CD8-positive, alpha-beta T cell (primary cell): ENCODE measurements at regions of chr14 and their contacts with region 1.

Region 1: DNA sequence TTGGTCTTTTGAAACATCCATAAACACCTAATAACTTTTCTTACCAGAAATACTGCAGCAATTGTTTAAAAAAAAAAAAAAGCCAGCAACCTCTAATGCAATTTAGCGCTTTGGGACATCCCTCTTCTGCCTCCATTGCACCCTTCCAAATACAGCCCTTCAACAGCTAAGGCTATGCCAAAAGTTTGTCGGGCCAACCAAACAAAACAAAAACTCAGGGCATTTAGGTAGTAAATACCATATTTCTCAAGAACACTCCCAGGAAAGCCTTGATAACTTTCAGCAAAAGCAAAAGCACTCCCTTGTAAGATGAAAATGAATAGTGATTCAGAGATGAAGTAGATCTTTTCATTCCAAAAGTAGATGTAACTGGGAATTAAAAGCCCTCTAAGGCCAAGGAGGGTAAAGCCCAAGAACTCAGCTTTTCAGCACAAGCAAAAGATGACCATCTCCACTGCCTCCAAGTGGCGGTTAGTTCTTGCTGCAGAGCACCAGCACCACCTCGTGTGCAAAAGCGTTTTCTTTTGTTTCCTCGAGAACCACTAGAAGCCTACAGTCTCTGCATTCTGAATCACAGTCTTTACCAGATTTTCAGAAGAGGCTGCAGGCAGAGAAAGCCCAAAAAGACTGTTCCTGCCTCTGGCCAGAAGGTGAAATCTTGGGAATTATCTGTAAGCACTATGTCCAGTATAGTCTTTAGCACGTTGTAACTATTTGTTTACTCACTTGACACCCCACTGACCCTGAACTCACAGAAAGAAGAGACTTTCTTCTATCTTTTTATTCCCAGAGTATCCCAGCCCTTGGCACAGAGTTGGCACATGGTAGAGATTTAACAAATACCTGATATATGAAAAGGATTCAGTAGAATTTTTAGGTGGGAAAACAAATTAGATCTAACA is 53.1 kb downstream of the SIX6 start:
- DNase-seq: peak in 2 of 9 experiments; percentile 26 to 36
- ATAC-seq: no peak
- H3K4me3 ChIP-seq: no peak overlapping the region
- H3K4me3 Mint-ChIP-seq: no peak overlapping the region
- H3K27ac ChIP-seq: no peak overlapping the region
- H3K27ac Mint-ChIP-seq: no peak overlapping the region
- H3K4me1 ChIP-seq: no peaks in the 10 kb centered on the region
- H3K4me1 Mint-ChIP-seq: no peaks in the 10 kb centered on the region
- H3K27me3 ChIP-seq: no peaks in the 10 kb centered on the region
- H3K27me3 Mint-ChIP-seq: peaks cover 3% of the 10 kb centered on the region
- CTCF ChIP-seq: no peak

Region 2: GRCh38 chr14:60064491-60065072 is 497.5 kb before region 1 on chr14:
- CTCF ChIA-PET with region 1: interaction called, 3 read pairs
- POLR2A ChIA-PET with region 1: no interaction called
- intact Hi-C with region 1: loop called in 1 of 2 experiments (anchors 10 kb)
- DNase-seq: peak in 2 of 9 experiments; percentile 53 to 66
- ATAC-seq: peak; percentile 80
- H3K4me3 ChIP-seq: no peak overlapping the region
- H3K4me3 Mint-ChIP-seq: no peak overlapping the region
- H3K27ac ChIP-seq: no peak overlapping the region
- H3K27ac Mint-ChIP-seq: no peak overlapping the region
- H3K4me1 ChIP-seq: no peaks in the 10 kb centered on the region
- H3K4me1 Mint-ChIP-seq: no peaks in the 10 kb centered on the region
- H3K27me3 ChIP-seq: no peaks in the 10 kb centered on the region
- H3K27me3 Mint-ChIP-seq: peaks cover 2% of the 10 kb centered on the region
- CTCF ChIP-seq: peak; percentile 71

Region 3: DNA sequence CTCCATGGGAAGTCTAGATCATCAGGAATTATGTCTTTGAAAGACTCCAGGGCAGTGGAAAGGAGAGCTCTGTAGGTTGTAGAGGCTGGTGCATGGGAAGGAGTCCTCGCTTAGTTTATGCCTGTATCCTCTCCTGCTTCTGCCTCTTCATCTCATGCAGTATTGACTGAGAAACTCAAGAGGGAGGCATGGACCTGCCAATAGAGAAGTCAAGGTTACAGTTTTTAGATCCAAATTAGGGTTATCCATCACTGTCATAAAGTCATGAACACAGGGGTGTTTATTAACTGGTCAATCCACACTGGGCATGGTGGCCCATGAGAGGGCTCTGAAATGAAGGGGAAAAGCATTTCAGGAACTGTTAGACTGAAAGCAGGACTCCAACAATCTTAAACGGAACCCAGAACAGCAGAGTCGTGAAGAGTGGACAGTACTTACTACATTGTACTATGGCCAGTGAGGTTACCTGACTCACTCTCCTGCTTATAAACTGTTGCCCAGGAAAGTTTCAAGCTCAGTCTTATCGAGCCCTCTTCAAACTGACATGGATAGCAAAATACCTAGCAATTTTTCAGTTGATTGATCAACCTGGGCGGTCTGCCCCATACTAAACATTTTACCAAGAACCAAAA is 366.8 kb before region 1 on chr14:
- CTCF ChIA-PET with region 1: no interaction called
- POLR2A ChIA-PET with region 1: no interaction called
- intact Hi-C with region 1: loop called in 1 of 2 experiments (anchors 5 kb)
- DNase-seq: peak in 2 of 9 experiments; percentile 13 to 33
- ATAC-seq: peak; percentile 52
- H3K4me3 ChIP-seq: no peak overlapping the region
- H3K4me3 Mint-ChIP-seq: no peak overlapping the region
- H3K27ac ChIP-seq: no peak overlapping the region
- H3K27ac Mint-ChIP-seq: no peak overlapping the region
- H3K4me1 ChIP-seq: no peaks in the 10 kb centered on the region
- H3K4me1 Mint-ChIP-seq: no peaks in the 10 kb centered on the region
- H3K27me3 ChIP-seq: peaks cover 0 to 3% of the 10 kb centered on the region in 2 experiments
- H3K27me3 Mint-ChIP-seq: peaks cover 5% of the 10 kb centered on the region
- CTCF ChIP-seq: no peak

Region 4: GRCh38 chr14:60266021-60266937 is 295.8 kb before region 1 on chr14:
- CTCF ChIA-PET with region 1: no interaction called
- POLR2A ChIA-PET with region 1: no interaction called
- intact Hi-C with region 1: loop called in 1 of 2 experiments (anchors 5 kb)
- DNase-seq: peak in 5 of 9 experiments; percentile 22 to 57 (median 29)
- ATAC-seq: peak; percentile 61
- H3K4me3 ChIP-seq: no peak overlapping the region
- H3K4me3 Mint-ChIP-seq: no peak overlapping the region
- H3K27ac ChIP-seq: no peak overlapping the region
- H3K27ac Mint-ChIP-seq: no peak overlapping the region
- H3K4me1 ChIP-seq: peaks cover 6% of the 10 kb centered on the region
- H3K4me1 Mint-ChIP-seq: peaks cover 33% of the 10 kb centered on the region
- H3K27me3 ChIP-seq: no peaks in the 10 kb centered on the region
- H3K27me3 Mint-ChIP-seq: no peaks in the 10 kb centered on the region
- CTCF ChIP-seq: peak; percentile 75

Region 5: GRCh38 chr14:60349663-60350365 is 212.3 kb before region 1 on chr14:
- CTCF ChIA-PET with region 1: no interaction called
- POLR2A ChIA-PET with region 1: no interaction called
- intact Hi-C with region 1: loop called (anchors 2 to 5 kb)
- DNase-seq: peak in 4 of 9 experiments; percentile 19 to 56 (median 40)
- ATAC-seq: peak; percentile 57
- H3K4me3 ChIP-seq: no peak overlapping the region
- H3K4me3 Mint-ChIP-seq: no peak overlapping the region
- H3K27ac ChIP-seq: no peak overlapping the region
- H3K27ac Mint-ChIP-seq: no peak overlapping the region
- H3K4me1 ChIP-seq: no peaks in the 10 kb centered on the region
- H3K4me1 Mint-ChIP-seq: peaks cover 4% of the 10 kb centered on the region
- H3K27me3 ChIP-seq: no peaks in the 10 kb centered on the region
- H3K27me3 Mint-ChIP-seq: peaks cover 8% of the 10 kb centered on the region
- CTCF ChIP-seq: peak; percentile 42